Heart left ventricle (tissue), 16 donors: ENCODE measurements at regions of chr13 and their contacts with region 1.

Region 1: DNA sequence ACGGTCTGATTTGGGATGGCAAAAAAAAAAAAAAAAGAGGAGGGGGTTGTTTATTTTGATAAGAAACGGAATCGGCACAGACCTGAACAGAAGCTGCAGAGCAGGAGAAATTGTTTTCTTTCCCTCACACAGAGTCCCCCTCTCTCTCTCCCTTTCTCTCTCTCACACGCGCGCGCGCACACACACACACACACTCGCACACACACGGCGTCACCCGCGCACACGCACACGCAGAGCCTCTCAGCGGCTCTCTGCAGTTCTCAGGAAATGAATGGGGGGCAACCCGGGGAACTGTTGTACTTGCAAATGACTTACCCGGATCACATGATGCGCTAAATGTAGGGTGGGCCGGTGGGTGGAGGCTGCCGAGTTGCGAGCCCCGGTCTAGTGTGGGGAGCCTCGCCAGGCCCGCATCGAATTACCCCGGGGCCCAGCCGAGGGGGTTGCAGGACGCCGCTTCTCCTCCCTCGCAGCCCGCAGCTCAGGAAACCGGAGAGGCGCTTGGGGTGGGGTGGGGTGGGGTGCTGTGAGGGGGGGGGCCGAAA is 475 bp downstream of the KLF12 start:
- DNase-seq: peak; percentile 89 to 92 (median 89)
- ATAC-seq: peak; percentile 64 to 78 (median 74)
- H3K4me3 ChIP-seq: peak overlapping the region; percentile 69 to 97 (median 89)
- H3K27ac ChIP-seq: peak overlapping the region; percentile 92 to 99 (median 98)
- H3K4me1 ChIP-seq: peaks cover 3 to 43% (median 36%) of the 10 kb centered on the region in 12 donors
- H3K27me3 ChIP-seq: peaks cover 0 to 4% (median 0%) of the 10 kb centered on the region in 9 donors
- CTCF ChIP-seq: no peak
- POLR2A ChIP-seq: peak in 1 of 2 donors; percentile 25

Region 2: GRCh38 chr13:73835138-73835721 is 298.5 kb before region 1 on chr13:
- intact Hi-C with region 1: loop called in 9 of 10 experiments (anchors 1 to 10 kb)
- DNase-seq: no peak
- ATAC-seq: peak in 2 of 4 donors; percentile 48 to 69
- H3K4me3 ChIP-seq: no peak overlapping the region
- H3K27ac ChIP-seq: no peak overlapping the region
- H3K4me1 ChIP-seq: peaks cover 0 to 28% (median 4%) of the 10 kb centered on the region in 12 donors
- H3K27me3 ChIP-seq: no peaks in the 10 kb centered on the region
- CTCF ChIP-seq: peak; percentile 56 to 78 (median 70)
- POLR2A ChIP-seq: no peak

Region 3: DNA sequence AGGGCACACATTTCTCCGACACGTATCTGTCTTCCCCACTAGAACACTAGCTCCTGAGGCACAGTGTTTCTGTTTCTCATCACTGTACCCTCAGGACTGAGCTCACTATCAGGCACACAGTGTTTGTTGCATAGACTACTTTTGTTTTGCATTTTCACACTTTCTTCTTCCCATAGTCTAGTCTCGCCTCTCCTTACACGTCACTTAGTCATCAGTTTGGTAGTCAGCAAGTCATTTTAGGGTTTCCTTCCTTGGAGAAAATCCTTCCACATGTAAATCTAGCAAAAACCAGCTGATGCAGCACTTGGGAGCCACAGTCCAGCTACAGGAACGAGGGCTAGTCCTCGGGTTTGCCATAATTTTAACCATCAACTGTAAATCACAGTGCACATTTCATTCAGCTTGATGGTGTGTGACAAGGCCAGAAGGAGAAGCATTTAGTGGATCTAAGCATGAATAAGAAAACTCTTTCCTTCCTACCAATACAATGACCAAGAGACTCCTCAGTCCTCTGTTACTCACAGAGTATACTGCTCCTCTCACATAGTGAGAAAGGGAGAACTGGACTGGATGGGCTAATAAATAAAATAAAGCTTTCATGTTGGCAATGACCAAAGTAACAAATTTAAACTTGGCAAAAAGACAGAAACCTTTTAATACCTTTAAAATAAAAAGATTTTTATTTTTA is 220.5 kb before region 1 on chr13:
- intact Hi-C with region 1: no loop called
- DNase-seq: no peak
- ATAC-seq: peak; percentile 54 to 74 (median 62)
- H3K4me3 ChIP-seq: no peak overlapping the region
- H3K27ac ChIP-seq: peak overlapping the region in 4 of 12 donors; percentile 1 to 45 (median 4)
- H3K4me1 ChIP-seq: peaks cover 0 to 36% (median 24%) of the 10 kb centered on the region in 12 donors
- H3K27me3 ChIP-seq: no peaks in the 10 kb centered on the region
- CTCF ChIP-seq: no peak
- POLR2A ChIP-seq: no peak

Region 4: GRCh38 chr13:73970421-73971055 is 163.2 kb before region 1 on chr13:
- intact Hi-C with region 1: loop called in 1 of 10 experiments (anchors 10 kb)
- DNase-seq: no peak
- ATAC-seq: no peak
- H3K4me3 ChIP-seq: no peak overlapping the region
- H3K27ac ChIP-seq: no peak overlapping the region
- H3K4me1 ChIP-seq: peaks cover 0 to 68% (median 31%) of the 10 kb centered on the region in 12 donors
- H3K27me3 ChIP-seq: no peaks in the 10 kb centered on the region
- CTCF ChIP-seq: no peak
- POLR2A ChIP-seq: no peak

Region 5: GRCh38 chr13:74074723-74075122 is 59.0 kb before region 1 on chr13:
- intact Hi-C with region 1: loop called in 1 of 10 experiments (anchors 5 kb)
- DNase-seq: no peak
- ATAC-seq: peak in 2 of 4 donors; percentile 30 to 31
- H3K4me3 ChIP-seq: no peak overlapping the region
- H3K27ac ChIP-seq: no peak overlapping the region
- H3K4me1 ChIP-seq: peaks cover 0 to 61% (median 34%) of the 10 kb centered on the region in 12 donors
- H3K27me3 ChIP-seq: no peaks in the 10 kb centered on the region
- CTCF ChIP-seq: no peak
- POLR2A ChIP-seq: no peak

Region 6: GRCh38 chr13:74168263-74168675 is 34.5 kb after region 1 on chr13:
- intact Hi-C with region 1: no loop called
- DNase-seq: peak in 2 of 5 donors; percentile 15 to 31
- ATAC-seq: peak; percentile 67 to 97 (median 82)
- H3K4me3 ChIP-seq: no peak overlapping the region
- H3K27ac ChIP-seq: no peak overlapping the region
- H3K4me1 ChIP-seq: peaks cover 0 to 9% (median 0%) of the 10 kb centered on the region in 12 donors
- H3K27me3 ChIP-seq: no peaks in the 10 kb centered on the region
- CTCF ChIP-seq: no peak
- POLR2A ChIP-seq: no peak

Region 7: DNA sequence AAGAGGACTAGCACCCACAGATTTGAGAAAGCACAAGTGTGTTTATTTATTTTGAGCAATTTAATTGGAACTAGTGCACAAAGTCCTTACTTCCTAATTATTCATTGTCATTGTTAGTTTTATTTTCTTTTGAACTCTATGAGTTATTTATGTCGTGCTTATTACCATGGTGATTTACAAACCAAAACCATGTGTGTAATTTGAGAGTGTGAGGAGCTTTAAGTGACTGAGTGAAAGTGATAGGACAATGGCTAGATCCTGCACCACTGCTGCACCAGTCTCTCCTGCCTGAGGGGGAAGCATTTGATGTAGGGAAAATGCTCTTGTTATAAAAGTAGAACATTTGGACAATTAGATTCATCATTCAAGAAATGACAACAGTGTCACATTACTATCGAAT is 172.8 kb after region 1 on chr13:
- intact Hi-C with region 1: no loop called
- DNase-seq: no peak
- ATAC-seq: peak in 1 of 4 donors; percentile 48
- H3K4me3 ChIP-seq: no peak overlapping the region
- H3K27ac ChIP-seq: no peak overlapping the region
- H3K4me1 ChIP-seq: peaks cover 0 to 7% (median 0%) of the 10 kb centered on the region in 12 donors
- H3K27me3 ChIP-seq: no peaks in the 10 kb centered on the region
- CTCF ChIP-seq: peak in 1 of 12 donors; percentile 14
- POLR2A ChIP-seq: no peak

Region 8: DNA sequence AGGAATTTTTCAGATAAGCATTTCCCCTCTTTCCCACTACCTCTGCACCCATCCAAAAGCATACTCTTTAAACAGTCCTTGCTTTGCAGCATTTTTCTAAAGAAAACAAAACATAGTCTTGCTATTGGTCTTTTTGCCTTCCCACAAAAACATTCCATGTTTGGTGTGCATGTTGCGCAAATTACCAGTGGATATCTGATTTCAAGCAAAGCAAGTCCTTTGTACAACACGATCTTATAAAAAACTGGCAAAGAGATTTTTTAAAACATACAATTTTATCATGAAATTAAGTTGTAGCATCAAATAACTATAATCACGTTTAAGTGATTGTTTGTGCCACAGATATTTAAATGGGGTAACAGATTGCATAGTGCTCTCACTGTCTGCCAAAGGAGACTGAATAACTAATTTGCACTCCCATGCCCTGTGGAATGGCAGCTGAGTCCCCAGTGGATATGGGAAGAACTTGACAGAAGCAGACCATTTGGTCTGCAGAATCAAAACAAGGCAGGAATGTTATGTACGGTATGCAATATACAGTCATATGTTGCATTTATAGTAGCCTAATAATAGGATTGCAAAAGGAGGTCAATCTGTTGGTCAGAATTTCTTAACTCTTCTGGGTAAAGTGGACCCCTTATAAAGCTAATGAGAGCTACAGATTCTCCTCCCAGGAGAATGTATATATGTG is 1062.6 kb after region 1 on chr13:
- intact Hi-C with region 1: loop called in 1 of 10 experiments (anchors 10 kb)
- DNase-seq: no peak
- ATAC-seq: peak in 3 of 4 donors; percentile 31 to 69 (median 52)
- H3K4me3 ChIP-seq: no peak overlapping the region
- H3K27ac ChIP-seq: peak overlapping the region in 7 of 12 donors; percentile 7 to 74 (median 68)
- H3K4me1 ChIP-seq: peaks cover 0 to 43% (median 18%) of the 10 kb centered on the region in 12 donors
- H3K27me3 ChIP-seq: no peaks in the 10 kb centered on the region
- CTCF ChIP-seq: no peak
- POLR2A ChIP-seq: no peak